Mammary epithelial cell (primary cell): ENCODE measurements at regions of chr6 and their contacts with region 1.

Region 1: DNA sequence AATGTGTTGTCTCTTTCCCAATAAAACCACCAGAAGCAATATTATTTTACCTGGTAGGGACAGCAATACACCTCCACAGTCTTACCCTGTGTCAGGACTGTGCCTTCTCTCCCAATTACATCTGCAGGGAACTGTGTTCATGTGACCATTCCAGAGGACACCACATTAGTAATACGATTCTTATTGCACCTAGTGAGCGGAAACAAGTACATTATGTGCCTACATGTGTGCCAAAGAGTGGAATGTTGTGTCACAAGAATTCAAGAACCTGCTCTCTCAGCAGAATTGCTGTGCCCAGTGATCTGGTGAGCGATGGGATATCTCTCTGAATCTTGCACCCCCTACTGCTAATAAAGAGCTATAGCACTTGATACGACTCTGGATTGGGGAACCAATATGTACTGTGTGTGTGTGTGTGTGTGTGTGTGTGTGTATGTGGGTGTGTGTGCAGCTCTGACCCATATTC is 57.4 kb upstream of the FOXC1 start:
- DNase-seq: peak; percentile 21
- H3K4me3 ChIP-seq: no peak overlapping the region
- H3K27ac ChIP-seq: no peak overlapping the region
- H3K4me1 ChIP-seq: peaks cover 11% of the 10 kb centered on the region
- H3K27me3 ChIP-seq: no peaks in the 10 kb centered on the region
- CTCF ChIP-seq: peak; percentile 34 to 48

Region 2: DNA sequence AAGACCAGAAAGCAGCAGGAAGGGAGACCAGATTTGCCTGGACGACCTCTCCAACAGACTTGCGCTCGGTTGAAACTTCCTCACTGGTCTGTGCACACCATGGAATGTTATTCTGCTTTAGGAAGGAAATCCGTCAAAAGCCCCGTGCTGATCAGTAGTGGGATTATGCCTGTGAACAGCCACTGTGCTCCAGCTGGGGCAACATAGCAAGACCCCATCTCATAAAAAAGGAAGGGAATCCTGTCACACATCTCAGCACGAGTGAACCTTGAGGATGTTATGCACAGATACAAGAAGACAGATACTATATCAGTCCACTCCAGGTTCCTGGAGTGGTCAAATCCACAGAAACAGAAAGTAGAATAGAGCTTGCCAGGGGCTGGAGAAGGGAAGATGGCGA is 29.6 kb before region 1 on chr6:
- CTCF ChIA-PET with region 1: interaction called, 3 read pairs
- dilution Hi-C with region 1: no loop called
- in situ Hi-C with region 1: no loop called
- intact Hi-C with region 1: loop called (anchors 1 kb)
- DNase-seq: no peak
- H3K4me3 ChIP-seq: no peak overlapping the region
- H3K27ac ChIP-seq: no peak overlapping the region
- H3K4me1 ChIP-seq: peaks cover 12% of the 10 kb centered on the region
- H3K27me3 ChIP-seq: no peaks in the 10 kb centered on the region
- CTCF ChIP-seq: no peak